ENCODE measurements at regions of chr17 and their contacts with region 1.

Region 1: DNA sequence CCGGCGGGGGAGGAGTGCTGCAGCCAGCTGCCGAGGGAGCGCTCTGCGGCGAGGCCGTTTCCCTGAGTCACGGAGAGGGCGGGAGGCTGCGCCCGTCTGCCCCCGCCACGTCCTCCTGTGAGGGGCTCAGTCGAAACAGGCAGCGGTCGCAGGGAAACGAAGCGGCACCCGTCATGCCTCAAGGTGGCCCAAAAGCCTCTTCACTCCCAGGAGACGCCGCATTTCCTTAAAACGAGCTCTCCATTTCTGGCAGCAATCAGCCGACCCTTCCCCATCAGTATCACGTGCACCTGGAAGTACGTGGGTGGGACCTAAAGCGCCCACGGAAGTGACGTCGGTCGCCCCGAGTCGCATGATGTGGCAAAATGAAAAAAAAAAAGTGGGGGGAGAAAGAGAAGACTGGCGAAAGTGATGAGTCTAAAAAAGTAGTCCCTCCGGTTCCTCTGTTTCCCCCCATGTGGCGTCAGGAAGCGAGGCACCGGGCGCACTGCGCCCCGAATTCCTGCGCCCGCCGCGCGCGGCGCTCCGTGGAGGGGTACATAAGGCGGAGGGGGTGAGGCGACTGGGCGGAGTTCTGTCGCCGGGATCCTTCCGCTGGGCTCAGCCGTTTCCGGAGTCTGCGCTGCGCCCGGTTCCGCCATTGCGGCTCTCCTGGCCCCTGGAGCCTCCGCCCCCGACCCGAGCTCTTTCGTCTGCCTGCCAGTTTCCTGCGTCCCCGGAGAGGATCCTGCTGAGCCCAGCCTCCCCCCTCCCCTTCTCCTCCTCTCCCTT is at the start of gene CLTC:
- DNase-seq: peak; percentile 97
- total RNA-seq, gene CLTC: 204 TPM

Region 2: GRCh38 chr17:59565171-59565969 is 54.1 kb before region 1 on chr17 and contains the start of gene DHX40:
- intact Hi-C with region 1: loop called (anchors 10 kb)
- DNase-seq: peak; percentile 98
- total RNA-seq, gene DHX40: 18.2 TPM

Region 3: GRCh38 chr17:59707114-59707970 is 87.9 kb after region 1 on chr17 and contains the starts of genes PTRH2 and VMP1:
- intact Hi-C with region 1: loop called (anchors 2 kb)
- DNase-seq: peak; percentile 99
- total RNA-seq, gene PTRH2: 9.7 TPM
- total RNA-seq, gene VMP1: 82.8 TPM

Region 4: GRCh38 chr17:59786536-59787319 is 167.2 kb after region 1 on chr17:
- intact Hi-C with region 1: no loop called
- DNase-seq: no peak